Naive thymus-derived CD4-positive, alpha-beta T cell (primary cell): ENCODE measurements at regions of chr7 and their contacts with region 1.

Region 1: GRCh38 chr7:105046414-105046813 is 32.4 kb downstream of the KMT2E start:
- DNase-seq: no peak
- ATAC-seq: no peak
- H3K4me3 ChIP-seq: no peak overlapping the region
- H3K4me3 Mint-ChIP-seq: peak overlapping the region in 1 of 10 donors; percentile 44
- H3K27ac ChIP-seq: no peak overlapping the region
- H3K27ac Mint-ChIP-seq: peak overlapping the region in 6 of 9 donors; percentile 6 to 71 (median 42)
- H3K4me1 ChIP-seq: peaks cover 9 to 10% of the 10 kb centered on the region in 2 donors
- H3K4me1 Mint-ChIP-seq: peaks cover 32 to 76% (median 59%) of the 10 kb centered on the region in 7 donors
- H3K27me3 ChIP-seq: no peaks in the 10 kb centered on the region
- H3K27me3 Mint-ChIP-seq: no peaks in the 10 kb centered on the region

Region 2: GRCh38 chr7:105060437-105060836 is 14.0 kb after region 1 on chr7:
- CTCF ChIA-PET with region 1: no interaction called
- POLR2A ChIA-PET with region 1: no interaction called
- intact Hi-C with region 1: loop called in 1 of 2 experiments (anchors 2 kb)
- DNase-seq: no peak
- ATAC-seq: no peak
- H3K4me3 ChIP-seq: no peak overlapping the region
- H3K4me3 Mint-ChIP-seq: no peak overlapping the region
- H3K27ac ChIP-seq: no peak overlapping the region
- H3K27ac Mint-ChIP-seq: peak overlapping the region in 6 of 9 donors; percentile 12 to 85 (median 75)
- H3K4me1 ChIP-seq: peaks cover 4 to 11% of the 10 kb centered on the region in 2 donors
- H3K4me1 Mint-ChIP-seq: peaks cover 37 to 90% (median 81%) of the 10 kb centered on the region in 7 donors
- H3K27me3 ChIP-seq: no peaks in the 10 kb centered on the region
- H3K27me3 Mint-ChIP-seq: no peaks in the 10 kb centered on the region

Region 3: GRCh38 chr7:105364748-105365147 is 318.3 kb after region 1 on chr7:
- CTCF ChIA-PET with region 1: no interaction called
- POLR2A ChIA-PET with region 1: no interaction called
- intact Hi-C with region 1: no loop called
- DNase-seq: no peak
- ATAC-seq: no peak
- H3K4me3 ChIP-seq: no peak overlapping the region
- H3K4me3 Mint-ChIP-seq: no peak overlapping the region
- H3K27ac ChIP-seq: no peak overlapping the region
- H3K27ac Mint-ChIP-seq: no peak overlapping the region
- H3K4me1 ChIP-seq: peaks cover 8 to 10% of the 10 kb centered on the region in 2 donors
- H3K4me1 Mint-ChIP-seq: peaks cover 13 to 62% (median 49%) of the 10 kb centered on the region in 7 donors
- H3K27me3 ChIP-seq: no peaks in the 10 kb centered on the region
- H3K27me3 Mint-ChIP-seq: no peaks in the 10 kb centered on the region